ENCODE measurements at regions of chr12 and their contacts with region 1.

Region 1: GRCh38 chr12:49233842-49234535 is 30.9 kb upstream of the TUBA1C start:
- DNase-seq: peak; percentile 20 to 33
- ATAC-seq: peak in 1 of 3 donors; percentile 63
- H3K4me3 ChIP-seq: peak overlapping the region; percentile 2
- H3K4me3 Mint-ChIP-seq: peak overlapping the region; percentile 68
- H3K27ac ChIP-seq: peak overlapping the region; percentile 79
- H3K27ac Mint-ChIP-seq: peak overlapping the region; percentile 84 to 86
- H3K4me1 ChIP-seq: peaks cover 19% of the 10 kb centered on the region
- H3K4me1 Mint-ChIP-seq: peaks cover 0 to 13% of the 10 kb centered on the region in 2 donors
- H3K27me3 ChIP-seq: no peaks in the 10 kb centered on the region
- H3K27me3 Mint-ChIP-seq: no peaks in the 10 kb centered on the region
- CTCF ChIP-seq: no peak

Region 2: DNA sequence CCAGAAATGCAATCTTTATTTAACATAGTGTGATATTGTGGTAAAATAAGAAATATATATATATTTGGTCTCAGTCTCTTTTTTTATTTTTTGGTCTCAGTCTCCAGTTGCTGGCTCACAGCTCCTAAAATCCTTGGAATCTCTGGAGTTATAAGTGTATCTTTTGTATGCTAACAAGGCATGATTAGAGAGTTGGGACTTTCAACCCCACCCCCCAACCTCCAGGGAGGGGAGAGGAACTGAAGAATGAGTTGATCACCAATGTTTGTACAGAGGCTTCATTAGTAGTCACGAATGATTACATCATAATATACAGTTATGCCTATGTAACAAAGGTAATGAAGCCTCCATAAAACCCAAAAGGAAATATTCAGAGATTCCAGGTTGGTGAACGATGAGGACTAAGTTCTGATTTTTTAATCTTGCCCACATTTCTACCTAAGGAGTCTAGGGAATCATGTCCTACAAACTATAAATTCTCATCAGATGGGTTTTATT is 641.3 kb before region 1 on chr12:
- intact Hi-C with region 1: no loop called
- DNase-seq: no peak
- ATAC-seq: no peak
- H3K4me3 ChIP-seq: no peak overlapping the region
- H3K4me3 Mint-ChIP-seq: no peak overlapping the region
- H3K27ac ChIP-seq: no peak overlapping the region
- H3K27ac Mint-ChIP-seq: no peak overlapping the region
- H3K4me1 ChIP-seq: no peaks in the 10 kb centered on the region
- H3K4me1 Mint-ChIP-seq: no peaks in the 10 kb centered on the region
- H3K27me3 ChIP-seq: no peaks in the 10 kb centered on the region
- H3K27me3 Mint-ChIP-seq: peaks cover 19 to 52% of the 10 kb centered on the region in 2 donors
- CTCF ChIP-seq: no peak

Region 3: DNA sequence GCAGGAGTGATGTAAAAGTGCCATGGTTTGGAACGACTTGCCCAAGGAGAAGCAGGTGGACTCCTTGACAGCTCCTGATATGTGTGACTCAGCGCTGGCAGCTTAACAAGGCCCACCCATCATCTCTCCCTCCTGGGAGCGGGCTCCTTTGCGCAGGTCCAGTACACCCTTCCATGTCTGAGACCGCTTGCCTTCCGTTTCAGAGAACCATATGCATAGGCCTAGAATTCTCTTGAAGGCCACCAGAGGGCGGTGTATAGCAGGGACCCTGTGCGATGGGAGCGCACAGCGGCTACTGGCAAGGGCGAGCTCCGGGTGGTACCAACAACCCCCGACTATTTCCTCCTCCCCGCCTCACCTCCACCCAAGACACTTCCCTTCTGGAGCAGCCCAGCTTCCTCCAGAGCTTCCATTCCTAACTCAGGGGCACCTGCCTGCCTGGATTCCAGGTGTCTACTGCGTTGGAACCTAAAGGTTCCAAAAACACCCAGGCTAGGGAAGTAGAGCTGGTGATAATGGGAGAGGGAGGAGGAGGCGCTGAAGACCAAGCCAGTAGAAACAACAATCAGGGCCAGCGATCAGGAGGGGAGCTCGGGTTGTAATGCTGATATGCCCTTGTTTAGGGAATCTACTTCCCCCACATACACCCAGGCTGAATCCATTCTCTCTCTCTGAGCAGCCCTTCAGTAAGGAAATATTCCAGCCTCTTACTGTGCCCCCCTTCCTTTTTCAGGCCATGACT is 145.6 kb before region 1 on chr12:
- intact Hi-C with region 1: loop called (anchors 2 kb)
- DNase-seq: peak; percentile 62 to 92
- ATAC-seq: peak; percentile 88 to 94 (median 93)
- H3K4me3 ChIP-seq: no peak overlapping the region
- H3K4me3 Mint-ChIP-seq: peak overlapping the region; percentile 36
- H3K27ac ChIP-seq: no peak overlapping the region
- H3K27ac Mint-ChIP-seq: no peak overlapping the region
- H3K4me1 ChIP-seq: peaks cover 48% of the 10 kb centered on the region
- H3K4me1 Mint-ChIP-seq: peaks cover 13 to 38% of the 10 kb centered on the region in 2 donors
- H3K27me3 ChIP-seq: peaks cover 42% of the 10 kb centered on the region
- H3K27me3 Mint-ChIP-seq: peaks cover 10 to 40% of the 10 kb centered on the region in 2 donors
- CTCF ChIP-seq: peak; percentile 88

Region 4: GRCh38 chr12:49154221-49154620 is 79.8 kb before region 1 on chr12:
- intact Hi-C with region 1: no loop called
- DNase-seq: no peak
- ATAC-seq: no peak
- H3K4me3 ChIP-seq: no peak overlapping the region
- H3K4me3 Mint-ChIP-seq: no peak overlapping the region
- H3K27ac ChIP-seq: no peak overlapping the region
- H3K27ac Mint-ChIP-seq: no peak overlapping the region
- H3K4me1 ChIP-seq: no peaks in the 10 kb centered on the region
- H3K4me1 Mint-ChIP-seq: peaks cover 0 to 5% of the 10 kb centered on the region in 2 donors
- H3K27me3 ChIP-seq: no peaks in the 10 kb centered on the region
- H3K27me3 Mint-ChIP-seq: no peaks in the 10 kb centered on the region
- CTCF ChIP-seq: no peak

Region 5: GRCh38 chr12:49200919-49201594 is 32.9 kb before region 1 on chr12:
- intact Hi-C with region 1: loop called (anchors 1 kb)
- DNase-seq: peak in 1 of 2 donors; percentile 71
- ATAC-seq: peak; percentile 81 to 98 (median 92)
- H3K4me3 ChIP-seq: no peak overlapping the region
- H3K4me3 Mint-ChIP-seq: no peak overlapping the region
- H3K27ac ChIP-seq: no peak overlapping the region
- H3K27ac Mint-ChIP-seq: peak overlapping the region; percentile 1 to 59
- H3K4me1 ChIP-seq: no peaks in the 10 kb centered on the region
- H3K4me1 Mint-ChIP-seq: peaks cover 6 to 12% of the 10 kb centered on the region in 2 donors
- H3K27me3 ChIP-seq: no peaks in the 10 kb centered on the region
- H3K27me3 Mint-ChIP-seq: no peaks in the 10 kb centered on the region
- CTCF ChIP-seq: no peak

Region 6: DNA sequence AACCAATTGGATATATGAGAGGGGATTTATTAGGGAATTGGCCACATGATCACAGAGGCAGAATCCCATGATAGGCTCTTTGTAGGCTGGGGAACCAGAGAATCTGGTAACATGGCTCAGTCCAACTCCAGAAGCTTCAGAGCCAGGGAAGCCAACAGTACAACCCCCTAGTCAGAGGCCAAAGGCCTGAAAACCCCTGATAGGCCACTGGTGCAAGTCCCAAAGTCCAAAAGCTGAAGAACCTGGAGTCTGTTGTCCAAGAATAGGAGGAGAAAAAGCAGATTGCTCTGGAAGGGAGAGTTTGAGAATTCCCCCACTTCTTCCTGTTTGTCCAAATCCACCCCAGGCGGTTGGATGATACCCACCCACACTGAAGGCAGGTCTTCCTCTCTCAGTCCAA is 80.8 kb after region 1 on chr12:
- intact Hi-C with region 1: no loop called
- DNase-seq: no peak
- ATAC-seq: no peak
- H3K4me3 ChIP-seq: no peak overlapping the region
- H3K4me3 Mint-ChIP-seq: no peak overlapping the region
- H3K27ac ChIP-seq: no peak overlapping the region
- H3K27ac Mint-ChIP-seq: no peak overlapping the region
- H3K4me1 ChIP-seq: no peaks in the 10 kb centered on the region
- H3K4me1 Mint-ChIP-seq: no peaks in the 10 kb centered on the region
- H3K27me3 ChIP-seq: peaks cover 3% of the 10 kb centered on the region
- H3K27me3 Mint-ChIP-seq: peaks cover 0 to 5% of the 10 kb centered on the region in 2 donors
- CTCF ChIP-seq: no peak

Region 7: GRCh38 chr12:49482095-49483051 is 248.4 kb after region 1 on chr12:
- intact Hi-C with region 1: no loop called
- DNase-seq: no peak
- ATAC-seq: no peak
- H3K4me3 ChIP-seq: no peak overlapping the region
- H3K4me3 Mint-ChIP-seq: no peak overlapping the region
- H3K27ac ChIP-seq: no peak overlapping the region
- H3K27ac Mint-ChIP-seq: no peak overlapping the region
- H3K4me1 ChIP-seq: no peaks in the 10 kb centered on the region
- H3K4me1 Mint-ChIP-seq: peaks cover under 1 to 5% of the 10 kb centered on the region in 2 donors
- H3K27me3 ChIP-seq: no peaks in the 10 kb centered on the region
- H3K27me3 Mint-ChIP-seq: no peaks in the 10 kb centered on the region
- CTCF ChIP-seq: no peak

Measured in natural killer cell (primary cell).